Heart right ventricle (tissue), 16 donors: ENCODE measurements at regions of chr2 and their contacts with region 1.

Region 1: GRCh38 chr2:64052468-64053241 is 33.4 kb upstream of the VPS54 start:
- DNase-seq: peak in 1 of 2 donors; percentile 45
- ATAC-seq: peak; percentile 72 to 94 (median 81)
- H3K4me3 ChIP-seq: no peak overlapping the region
- H3K27ac ChIP-seq: peak overlapping the region; percentile 38 to 86 (median 70)
- H3K4me1 ChIP-seq: peaks cover 0 to 40% (median 15%) of the 10 kb centered on the region in 9 donors
- H3K27me3 ChIP-seq: no peaks in the 10 kb centered on the region
- CTCF ChIP-seq: no peak

Region 2: GRCh38 chr2:64018923-64019718 is 33.5 kb before region 1 on chr2 and contains the start of gene VPS54:
- intact Hi-C with region 1: no loop called
- DNase-seq: peak; percentile 48 to 70
- ATAC-seq: peak; percentile 81 to 93 (median 86)
- H3K4me3 ChIP-seq: peak within 1 kb of the TSS; percentile 61 to 86 (median 74)
- H3K27ac ChIP-seq: peak within 1 kb of the TSS; percentile 93 to 100 (median 98)
- H3K4me1 ChIP-seq: peaks cover 0 to 64% (median 49%) of the 10 kb centered on the region in 9 donors
- H3K27me3 ChIP-seq: no peaks in the 10 kb centered on the region
- CTCF ChIP-seq: peak in 2 of 9 donors; percentile 22 to 28
- total RNA-seq, gene VPS54: 9.4 to 12.7 (median 10.5) TPM

Region 3: DNA sequence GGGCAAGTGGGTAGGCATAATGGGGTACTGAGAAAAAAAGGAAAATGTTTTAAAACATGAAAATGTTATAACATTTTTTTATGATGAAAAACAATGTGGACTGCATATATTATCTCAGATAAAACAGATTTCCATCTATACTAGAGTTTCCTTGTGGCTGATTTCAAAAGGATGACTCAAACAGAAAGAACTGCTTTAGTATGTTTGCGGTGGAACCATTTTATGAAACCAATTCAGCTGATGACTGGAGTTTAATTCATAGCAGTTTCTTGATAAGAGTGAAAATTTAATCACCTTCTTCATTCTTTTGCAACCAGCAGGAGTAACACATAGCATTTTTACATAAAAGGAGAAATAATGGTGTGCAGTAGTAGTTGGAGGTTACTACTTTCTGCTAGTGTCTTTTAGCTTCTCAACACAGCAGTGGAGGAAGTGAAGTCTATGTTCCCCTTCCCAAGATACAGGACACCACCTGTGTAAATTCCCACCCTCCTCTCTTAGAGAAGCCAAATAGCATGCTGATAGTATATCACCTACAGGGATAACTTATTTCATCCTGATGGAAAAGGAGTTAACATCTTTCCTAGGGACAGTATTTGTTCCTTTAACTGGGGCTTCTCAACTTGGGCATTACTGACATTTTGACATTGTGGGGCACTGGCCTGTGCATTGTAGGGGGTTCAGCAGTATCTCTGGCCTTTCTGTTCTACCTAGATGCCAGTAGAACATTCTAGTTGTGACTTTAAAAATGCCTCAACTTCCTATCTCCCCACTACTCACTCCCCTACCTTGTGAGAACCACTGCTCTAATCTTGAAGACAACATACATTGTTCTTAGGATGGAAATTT is 61.6 kb after region 1 on chr2:
- intact Hi-C with region 1: loop called in 1 of 10 experiments (anchors 10 kb)
- DNase-seq: no peak
- ATAC-seq: peak in 1 of 8 donors; percentile 41
- H3K4me3 ChIP-seq: no peak overlapping the region
- H3K27ac ChIP-seq: peak overlapping the region in 4 of 10 donors; percentile 4 to 77 (median 52)
- H3K4me1 ChIP-seq: peaks cover 0 to 87% (median 60%) of the 10 kb centered on the region in 9 donors
- H3K27me3 ChIP-seq: no peaks in the 10 kb centered on the region
- CTCF ChIP-seq: no peak

Region 4: GRCh38 chr2:64203858-64204632 is 151.4 kb after region 1 on chr2:
- intact Hi-C with region 1: loop called in 1 of 10 experiments (anchors 10 kb)
- DNase-seq: peak; percentile 30 to 40
- ATAC-seq: peak in 7 of 8 donors; percentile 55 to 74 (median 68)
- H3K4me3 ChIP-seq: peak overlapping the region in 6 of 10 donors; percentile 11 to 37 (median 26)
- H3K27ac ChIP-seq: peak overlapping the region; percentile 48 to 89 (median 78)
- H3K4me1 ChIP-seq: peaks cover 2 to 57% (median 40%) of the 10 kb centered on the region in 9 donors
- H3K27me3 ChIP-seq: no peaks in the 10 kb centered on the region
- CTCF ChIP-seq: no peak

Region 5: DNA sequence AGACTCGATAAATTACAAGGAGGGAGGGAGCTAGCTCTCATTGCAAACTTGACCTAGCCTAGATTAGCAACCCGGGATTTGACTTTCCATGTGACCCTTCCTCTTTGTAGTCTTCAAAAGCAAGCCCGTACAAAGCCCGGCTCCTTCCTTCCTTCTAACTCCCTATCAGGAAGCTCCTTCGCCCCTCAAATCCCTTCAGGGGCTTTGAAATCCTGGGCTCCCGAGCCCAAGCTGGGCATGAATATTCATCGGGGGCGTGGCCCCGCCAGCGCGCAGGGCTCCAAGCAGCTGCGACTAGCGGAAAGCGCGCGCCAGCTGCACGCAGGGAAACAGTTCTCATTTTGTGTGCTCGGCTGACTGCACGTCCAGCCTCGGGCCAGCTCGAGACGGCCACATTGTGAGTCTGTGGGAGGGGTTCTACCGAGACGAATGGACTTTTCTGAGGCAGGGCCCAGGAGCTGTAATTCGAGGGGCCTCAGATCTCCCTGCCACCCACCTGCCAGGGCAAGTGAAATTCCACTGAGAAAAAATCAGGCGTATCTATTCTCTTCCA is 175.5 kb after region 1 on chr2:
- intact Hi-C with region 1: loop called in 2 of 10 experiments (anchors 5 to 10 kb)
- DNase-seq: peak; percentile 86 to 87
- ATAC-seq: peak; percentile 96 to 99 (median 98)
- H3K4me3 ChIP-seq: peak overlapping the region in 9 of 10 donors; percentile 30 to 59 (median 56)
- H3K27ac ChIP-seq: peak overlapping the region; percentile 41 to 93 (median 78)
- H3K4me1 ChIP-seq: peaks cover 3 to 35% (median 16%) of the 10 kb centered on the region in 9 donors
- H3K27me3 ChIP-seq: no peaks in the 10 kb centered on the region
- CTCF ChIP-seq: peak in 2 of 9 donors; percentile 4 to 18

Region 6: GRCh38 chr2:64238799-64239198 is 186.1 kb after region 1 on chr2:
- intact Hi-C with region 1: no loop called
- DNase-seq: no peak
- ATAC-seq: peak in 4 of 8 donors; percentile 38 to 62 (median 53)
- H3K4me3 ChIP-seq: no peak overlapping the region
- H3K27ac ChIP-seq: peak overlapping the region in 1 of 10 donors; percentile 51
- H3K4me1 ChIP-seq: peaks cover 0 to 38% (median 11%) of the 10 kb centered on the region in 9 donors
- H3K27me3 ChIP-seq: no peaks in the 10 kb centered on the region
- CTCF ChIP-seq: no peak

Region 7: DNA sequence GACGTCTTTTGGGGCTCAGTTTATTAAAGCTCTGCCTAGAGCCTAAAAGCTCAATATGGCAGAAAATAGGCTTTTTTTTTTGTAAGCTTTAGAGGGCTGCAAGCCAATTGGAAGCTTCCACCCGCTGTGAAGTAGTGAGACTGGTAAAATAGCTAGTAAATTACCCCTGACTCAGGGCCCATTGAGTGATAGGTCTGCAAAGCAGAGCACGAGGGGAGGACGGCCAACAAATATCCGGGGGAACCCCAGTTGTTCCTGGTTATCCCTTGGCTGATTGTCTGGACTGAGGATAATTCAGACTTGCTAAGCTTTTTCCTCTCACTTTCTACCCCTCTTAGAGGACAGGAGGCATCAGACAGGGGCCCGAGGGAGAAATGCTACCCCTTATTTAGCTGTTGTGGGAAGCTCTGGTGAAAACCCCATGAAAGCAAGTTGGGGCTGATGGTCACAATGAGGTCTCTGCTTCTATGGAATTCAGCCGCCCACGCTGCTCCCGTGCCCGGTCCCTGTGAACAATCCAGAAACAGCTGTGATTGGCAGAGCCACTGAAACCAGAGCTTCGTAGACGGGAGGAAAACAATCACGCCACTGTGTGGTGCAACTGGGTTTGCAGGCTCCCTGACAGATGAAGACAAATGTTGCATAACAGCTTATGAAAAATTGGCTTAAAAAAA is 259.4 kb after region 1 on chr2:
- intact Hi-C with region 1: loop called in 6 of 10 experiments (anchors 1 to 5 kb)
- DNase-seq: peak; percentile 61 to 81
- ATAC-seq: peak; percentile 88 to 95 (median 93)
- H3K4me3 ChIP-seq: peak overlapping the region in 3 of 10 donors; percentile 3 to 22 (median 8)
- H3K27ac ChIP-seq: peak overlapping the region in 7 of 10 donors; percentile 7 to 71 (median 53)
- H3K4me1 ChIP-seq: peaks cover 0 to 27% (median 18%) of the 10 kb centered on the region in 9 donors
- H3K27me3 ChIP-seq: no peaks in the 10 kb centered on the region
- CTCF ChIP-seq: peak; percentile 18 to 77 (median 58)

Region 8: DNA sequence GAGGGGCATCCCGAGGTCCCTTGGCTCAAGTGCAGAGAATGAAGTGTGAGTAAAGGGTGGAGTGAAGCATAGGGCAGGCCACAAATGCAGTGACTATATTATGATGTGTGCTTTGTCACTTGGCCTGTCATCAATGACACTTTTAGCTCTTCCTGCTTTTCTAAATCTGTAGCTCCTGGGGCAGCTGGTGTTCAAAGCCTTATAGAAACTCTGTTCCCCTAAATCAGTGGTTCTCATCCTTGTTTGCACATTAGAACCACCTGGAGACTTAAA is 265.8 kb after region 1 on chr2:
- intact Hi-C with region 1: loop called in 7 of 10 experiments (anchors 2 to 5 kb)
- DNase-seq: no peak
- ATAC-seq: no peak
- H3K4me3 ChIP-seq: no peak overlapping the region
- H3K27ac ChIP-seq: no peak overlapping the region
- H3K4me1 ChIP-seq: peaks cover 0 to 5% (median 2%) of the 10 kb centered on the region in 9 donors
- H3K27me3 ChIP-seq: peaks cover 0 to 4% (median 0%) of the 10 kb centered on the region in 7 donors
- CTCF ChIP-seq: no peak

Region 9: DNA sequence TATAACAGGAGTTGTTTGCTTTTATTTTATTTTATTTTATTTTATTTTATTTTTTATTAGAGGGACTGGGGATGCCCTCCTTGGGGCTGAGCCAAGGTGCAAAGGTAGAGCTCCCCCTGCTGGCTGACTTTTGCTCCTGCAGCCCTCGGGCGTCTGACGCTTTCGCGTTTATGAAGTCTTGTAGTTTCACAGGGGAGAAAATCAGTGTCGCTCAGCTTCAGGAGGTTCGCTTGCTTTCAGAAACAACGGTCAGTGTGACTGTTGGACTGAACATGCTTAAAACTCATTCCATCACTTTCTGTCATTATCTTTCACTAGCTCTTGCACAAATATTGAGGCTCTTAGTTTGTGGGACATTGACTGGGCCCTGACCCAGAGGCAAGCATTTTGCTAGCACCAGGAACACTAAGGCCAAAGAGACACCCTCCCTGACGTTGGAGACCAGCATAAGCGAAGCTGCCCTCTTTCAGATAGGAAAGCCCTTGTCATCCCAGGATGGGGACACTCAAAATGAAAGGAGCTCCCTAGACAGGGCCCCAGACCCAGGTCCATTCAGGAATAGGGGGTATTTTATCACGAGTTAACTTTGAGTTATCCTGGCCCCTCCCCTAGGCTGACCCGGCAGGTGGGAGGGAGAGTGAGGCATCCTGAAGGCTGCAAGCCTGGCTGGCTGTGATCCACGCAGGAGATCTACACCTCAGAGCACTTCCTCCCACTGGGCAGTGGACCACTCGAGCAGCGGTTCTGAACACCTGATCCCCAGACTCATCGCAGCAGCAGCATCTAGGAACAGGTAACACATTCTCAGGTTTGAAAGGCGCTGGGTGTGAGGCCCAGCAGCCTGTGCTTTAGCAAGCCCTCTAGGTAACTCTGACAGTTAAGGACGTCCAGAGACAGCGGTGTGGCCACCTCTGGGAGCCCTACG is 435.7 kb after region 1 on chr2:
- intact Hi-C with region 1: loop called (anchors 2 to 10 kb)
- DNase-seq: peak; percentile 63 to 72
- ATAC-seq: peak; percentile 34 to 87 (median 76)
- H3K4me3 ChIP-seq: no peak overlapping the region
- H3K27ac ChIP-seq: no peak overlapping the region
- H3K4me1 ChIP-seq: peaks cover 4 to 35% (median 21%) of the 10 kb centered on the region in 9 donors
- H3K27me3 ChIP-seq: peaks cover 0 to 6% (median 0%) of the 10 kb centered on the region in 7 donors
- CTCF ChIP-seq: peak; percentile 94 to 98 (median 97)